ENCODE measurements at regions of chr3 and their contacts with region 1.

Region 1: DNA sequence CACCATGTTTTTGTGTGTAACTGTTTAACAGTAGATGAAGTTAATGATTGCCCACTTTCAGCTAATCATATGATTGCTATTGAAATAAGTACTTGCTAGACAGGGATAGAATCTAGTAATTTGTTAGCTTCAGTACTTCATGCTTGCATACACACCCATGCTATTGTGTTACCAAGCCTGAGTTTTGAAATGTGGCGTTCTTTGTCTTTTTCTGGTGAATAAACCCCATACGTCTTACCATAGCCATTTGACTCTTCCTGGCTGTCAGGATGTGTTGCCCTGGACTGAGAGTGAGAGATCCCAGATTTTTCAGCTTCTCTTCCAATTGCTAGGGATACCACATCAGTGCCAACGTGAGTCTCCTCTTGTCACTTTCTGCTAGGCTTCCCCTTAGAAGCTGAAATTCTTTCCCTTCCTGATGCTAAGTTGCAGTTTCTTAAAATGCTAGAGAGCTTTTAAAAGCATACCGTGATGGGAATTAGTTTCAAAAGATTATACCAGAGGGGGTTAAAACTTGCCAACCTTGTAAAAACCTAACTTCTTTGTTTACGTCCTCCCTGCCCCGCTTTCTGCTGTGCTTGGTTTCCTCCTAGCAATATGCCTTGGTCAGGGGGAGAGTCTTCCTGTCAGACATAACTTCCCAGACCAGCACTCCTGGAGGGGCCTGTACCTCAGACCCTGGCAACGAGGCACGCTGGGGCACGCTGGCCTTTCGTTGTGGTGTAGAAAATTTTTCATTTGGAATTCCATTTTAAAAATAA is 62.9 kb upstream of the ULK4 start:
- DNase-seq: peak in 1 of 2 donors; percentile 64
- H3K4me3 ChIP-seq: no peak overlapping the region
- H3K27ac ChIP-seq: peak overlapping the region; percentile 57 to 90 (median 80)
- H3K4me1 ChIP-seq: peaks cover 41 to 83% (median 66%) of the 10 kb centered on the region in 4 donors
- H3K27me3 ChIP-seq: no peaks in the 10 kb centered on the region
- CTCF ChIP-seq: no peak
- EP300 ChIP-seq: no peak
- POLR2A ChIP-seq: no peak

Region 2: DNA sequence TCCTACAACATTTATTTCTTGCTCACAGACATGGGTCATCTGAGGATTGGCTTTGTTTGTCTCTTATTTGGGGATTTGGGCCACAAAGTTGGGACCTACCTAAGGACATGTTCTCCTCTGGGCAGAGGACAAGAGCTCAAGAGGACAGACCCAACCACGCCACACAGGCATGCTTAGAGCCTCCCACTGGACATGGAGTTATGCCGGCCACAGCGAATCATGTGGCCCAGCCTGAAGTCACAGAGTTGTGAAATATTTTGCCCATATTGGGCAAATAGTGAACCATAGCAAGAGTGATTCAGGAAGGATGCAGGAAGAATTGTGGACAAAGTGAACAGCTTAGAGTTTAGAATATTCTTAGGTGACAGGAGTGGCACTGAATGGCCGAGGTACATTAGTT is 76.3 kb after region 1 on chr3:
- intact Hi-C with region 1: loop called (anchors 5 kb)
- DNase-seq: no peak
- H3K4me3 ChIP-seq: no peak overlapping the region
- H3K27ac ChIP-seq: peak overlapping the region in 4 of 5 donors; percentile 28 to 67 (median 51)
- H3K4me1 ChIP-seq: peaks cover 6 to 63% (median 36%) of the 10 kb centered on the region in 4 donors
- H3K27me3 ChIP-seq: no peaks in the 10 kb centered on the region
- CTCF ChIP-seq: no peak
- EP300 ChIP-seq: no peak
- POLR2A ChIP-seq: no peak

Region 3: GRCh38 chr3:42214565-42215283 is 190.0 kb after region 1 on chr3:
- intact Hi-C with region 1: no loop called
- DNase-seq: no peak
- H3K4me3 ChIP-seq: no peak overlapping the region
- H3K27ac ChIP-seq: no peak overlapping the region
- H3K4me1 ChIP-seq: no peaks in the 10 kb centered on the region
- H3K27me3 ChIP-seq: no peaks in the 10 kb centered on the region
- CTCF ChIP-seq: no peak
- EP300 ChIP-seq: no peak
- POLR2A ChIP-seq: no peak

Measured in stomach (tissue), 19 donors.